A673 (cell line): ENCODE measurements at regions of chr2 and their contacts with region 1.

Region 1: GRCh38 chr2:164523726-164524125 is 97.6 kb downstream of the GRB14 start:
- DNase-seq: no peak
- H3K4me3 ChIP-seq: no peak overlapping the region
- H3K27ac ChIP-seq: no peak overlapping the region
- H3K4me1 ChIP-seq: no peaks in the 10 kb centered on the region
- H3K27me3 ChIP-seq: peaks cover 60% of the 10 kb centered on the region
- CTCF ChIP-seq: no peak

Region 2: GRCh38 chr2:164538240-164538866 is 14.6 kb after region 1 on chr2:
- CTCF ChIA-PET with region 1: interaction called, 12 read pairs
- POLR2A ChIA-PET with region 1: no interaction called
- intact Hi-C with region 1: no loop called
- DNase-seq: peak; percentile 66
- H3K4me3 ChIP-seq: no peak overlapping the region
- H3K27ac ChIP-seq: no peak overlapping the region
- H3K4me1 ChIP-seq: peaks cover 7% of the 10 kb centered on the region
- H3K27me3 ChIP-seq: peaks cover 31% of the 10 kb centered on the region
- CTCF ChIP-seq: peak; percentile 81